Caco-2 (cell line): ENCODE measurements at regions of chr4 and their contacts with region 1.

Region 1: GRCh38 chr4:7081891-7082471 is 14.1 kb upstream of the GRPEL1 start:
- DNase-seq: peak; percentile 76 to 78
- H3K4me3 ChIP-seq: no peak overlapping the region
- H3K4me3 Mint-ChIP-seq: no peak overlapping the region
- H3K27ac Mint-ChIP-seq: no peak overlapping the region
- H3K4me1 ChIP-seq: no peaks in the 10 kb centered on the region
- H3K4me1 Mint-ChIP-seq: peaks cover 11% of the 10 kb centered on the region
- H3K27me3 ChIP-seq: no peaks in the 10 kb centered on the region
- H3K27me3 Mint-ChIP-seq: no peaks in the 10 kb centered on the region
- CTCF ChIP-seq: peak; percentile 62 to 73

Region 2: GRCh38 chr4:7052923-7053715 is 28.9 kb before region 1 on chr4:
- CTCF ChIA-PET with region 1: no interaction called
- POLR2A ChIA-PET with region 1: no interaction called
- intact Hi-C with region 1: no loop called
- DNase-seq: no peak
- H3K4me3 ChIP-seq: no peak overlapping the region
- H3K4me3 Mint-ChIP-seq: no peak overlapping the region
- H3K27ac Mint-ChIP-seq: no peak overlapping the region
- H3K4me1 ChIP-seq: no peaks in the 10 kb centered on the region
- H3K4me1 Mint-ChIP-seq: no peaks in the 10 kb centered on the region
- H3K27me3 ChIP-seq: no peaks in the 10 kb centered on the region
- H3K27me3 Mint-ChIP-seq: no peaks in the 10 kb centered on the region
- CTCF ChIP-seq: no peak

Region 3: GRCh38 chr4:7124689-7125442 is 42.9 kb after region 1 on chr4:
- CTCF ChIA-PET with region 1: no interaction called
- POLR2A ChIA-PET with region 1: no interaction called
- intact Hi-C with region 1: no loop called
- DNase-seq: no peak
- H3K4me3 ChIP-seq: no peak overlapping the region
- H3K4me3 Mint-ChIP-seq: no peak overlapping the region
- H3K27ac Mint-ChIP-seq: no peak overlapping the region
- H3K4me1 ChIP-seq: no peaks in the 10 kb centered on the region
- H3K4me1 Mint-ChIP-seq: no peaks in the 10 kb centered on the region
- H3K27me3 ChIP-seq: no peaks in the 10 kb centered on the region
- H3K27me3 Mint-ChIP-seq: no peaks in the 10 kb centered on the region
- CTCF ChIP-seq: no peak

Region 4: GRCh38 chr4:7658321-7659204 is 576.6 kb after region 1 on chr4:
- CTCF ChIA-PET with region 1: no interaction called
- POLR2A ChIA-PET with region 1: interaction called, 11 read pairs
- intact Hi-C with region 1: no loop called
- DNase-seq: no peak
- H3K4me3 ChIP-seq: no peak overlapping the region
- H3K4me3 Mint-ChIP-seq: no peak overlapping the region
- H3K27ac Mint-ChIP-seq: no peak overlapping the region
- H3K4me1 ChIP-seq: no peaks in the 10 kb centered on the region
- H3K4me1 Mint-ChIP-seq: no peaks in the 10 kb centered on the region
- H3K27me3 ChIP-seq: no peaks in the 10 kb centered on the region
- H3K27me3 Mint-ChIP-seq: no peaks in the 10 kb centered on the region
- CTCF ChIP-seq: no peak